HEK293 (cell line): ENCODE measurements at regions of chr1 and their contacts with region 1.

Region 1: GRCh38 chr1:26602378-26602959 is 72.9 kb downstream of the RPS6KA1 start:
- H3K4me3 ChIP-seq: no peak overlapping the region
- H3K27ac ChIP-seq: no peak overlapping the region
- H3K4me1 ChIP-seq: no peaks in the 10 kb centered on the region
- CTCF ChIP-seq: peak; percentile 52; the same call in 1 of the 2 replicates

Region 2: GRCh38 chr1:26529405-26529654 is 73.1 kb before region 1 on chr1:
- CTCF ChIA-PET with region 1: no interaction called
- POLR2A ChIA-PET with region 1: no interaction called
- H3K4me3 ChIP-seq: peak overlapping the region; percentile 41
- H3K27ac ChIP-seq: peak overlapping the region; percentile 47; the same call in 1 of the 2 replicates
- H3K4me1 ChIP-seq: 0 out of 2 replicates have a peak, but pooled peaks cover 6% of the 10 kb centered on the region
- CTCF ChIP-seq: no peak

Region 3: GRCh38 chr1:26614655-26615411 is 12.4 kb after region 1 on chr1:
- CTCF ChIA-PET with region 1: interaction called, 15 read pairs
- POLR2A ChIA-PET with region 1: no interaction called
- H3K4me3 ChIP-seq: no peak overlapping the region
- H3K27ac ChIP-seq: no peak overlapping the region
- H3K4me1 ChIP-seq: no peaks in the 10 kb centered on the region
- CTCF ChIP-seq: no peak

Region 4: GRCh38 chr1:26695356-26696118 is 93.1 kb after region 1 on chr1 and contains the start of gene ARID1A:
- CTCF ChIA-PET with region 1: interaction called, 11 read pairs
- POLR2A ChIA-PET with region 1: interaction called, 3 read pairs
- H3K4me3 ChIP-seq: peak within 1 kb of the TSS; percentile 72
- H3K27ac ChIP-seq: peak within 1 kb of the TSS; percentile 92
- H3K4me1 ChIP-seq: peaks cover 19% of the 10 kb centered on the region
- CTCF ChIP-seq: peak; percentile 75

Region 5: GRCh38 chr1:26787706-26788514 is 185.4 kb after region 1 on chr1 and contains the start of gene PIGV:
- CTCF ChIA-PET with region 1: interaction called, 281 read pairs
- POLR2A ChIA-PET with region 1: interaction called, 7 read pairs
- H3K4me3 ChIP-seq: peak within 1 kb of the TSS; percentile 75
- H3K27ac ChIP-seq: peak within 1 kb of the TSS; percentile 90
- H3K4me1 ChIP-seq: peaks cover 14% of the 10 kb centered on the region
- CTCF ChIP-seq: 0 out of 2 replicates have a peak, but pooled peaks have one; percentile 9

Region 6: GRCh38 chr1:26858160-26858559 is 255.7 kb after region 1 on chr1:
- CTCF ChIA-PET with region 1: interaction called, 18 read pairs
- POLR2A ChIA-PET with region 1: no interaction called
- H3K4me3 ChIP-seq: no peak overlapping the region
- H3K27ac ChIP-seq: no peak overlapping the region
- H3K4me1 ChIP-seq: 0 out of 2 replicates have a peak, but pooled peaks cover under 1% of the 10 kb centered on the region
- CTCF ChIP-seq: no peak

Region 7: DNA sequence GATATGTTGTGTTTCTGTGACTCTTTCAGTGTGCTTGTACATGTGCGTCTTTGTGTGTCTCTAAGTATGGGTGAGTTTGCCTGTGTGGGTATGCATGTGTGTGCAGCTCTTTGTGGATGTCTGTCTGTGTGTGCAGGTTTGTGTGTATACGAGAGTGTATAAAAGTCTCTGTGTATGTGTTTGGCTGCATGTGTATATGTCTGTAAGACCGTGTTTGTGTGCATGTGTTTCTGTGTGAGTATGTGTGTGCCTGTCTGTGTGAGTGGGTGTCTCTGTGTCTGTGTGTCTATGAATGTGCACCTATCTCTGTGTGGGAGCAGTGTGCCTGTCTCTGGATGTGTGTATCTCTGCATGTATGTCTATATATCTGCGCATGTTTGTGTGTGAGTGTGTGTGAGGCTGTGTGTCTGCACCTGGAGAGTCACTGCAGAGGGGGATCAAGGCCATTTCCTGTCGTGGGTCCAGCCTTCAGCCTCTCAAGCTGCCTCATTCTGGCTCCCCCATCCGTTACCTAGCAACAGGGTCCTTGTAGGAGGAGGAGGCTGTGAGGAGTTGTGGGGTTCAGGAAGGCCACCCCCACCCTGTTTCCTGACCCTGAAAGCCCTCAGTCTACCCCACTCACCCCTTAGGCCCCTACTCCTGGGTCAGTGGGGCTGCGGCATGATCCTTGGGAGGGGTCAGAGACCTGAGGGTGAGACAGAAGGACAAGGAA is 1022.2 kb after region 1 on chr1:
- CTCF ChIA-PET with region 1: no interaction called
- POLR2A ChIA-PET with region 1: no interaction called
- H3K4me3 ChIP-seq: no peak overlapping the region
- H3K27ac ChIP-seq: no peak overlapping the region
- H3K4me1 ChIP-seq: no peaks in the 10 kb centered on the region
- CTCF ChIP-seq: no peak